ENCODE measurements at regions of chr7 and their contacts with region 1.

Region 1: DNA sequence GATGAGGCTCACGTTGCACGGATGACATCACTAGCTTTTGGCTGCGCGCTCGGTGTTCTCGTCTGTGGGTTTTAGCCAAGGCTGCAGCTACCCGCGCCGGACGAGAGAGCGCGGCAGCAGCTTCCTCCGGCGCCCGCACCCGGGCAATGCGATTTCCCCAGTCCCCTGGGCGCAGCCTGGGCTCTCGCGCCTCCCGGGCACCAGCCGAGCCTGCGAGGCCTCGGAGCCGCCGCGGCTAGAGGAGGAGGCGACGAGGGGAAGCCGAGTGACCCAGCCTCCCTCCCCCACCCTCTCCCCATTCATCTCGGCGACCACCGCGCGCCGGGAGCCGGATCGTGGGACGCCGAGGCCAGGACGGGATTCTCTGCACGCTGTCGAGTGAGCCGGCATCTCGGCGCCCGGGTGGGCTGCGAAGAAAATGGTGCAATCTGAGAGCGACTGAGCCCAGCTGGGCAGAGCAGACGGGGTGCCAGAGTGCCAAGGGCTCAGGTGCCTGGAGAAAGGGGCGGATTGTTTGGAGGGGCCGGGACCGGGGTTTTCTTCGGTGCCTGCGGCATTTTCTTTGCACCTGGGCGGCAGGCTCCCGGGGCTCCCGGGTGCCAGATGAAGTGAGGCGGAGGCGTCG is 1.2 kb upstream of the TMEM178B start:
- DNase-seq: peak; percentile 82
- H3K4me3 Mint-ChIP-seq: peak overlapping the region; percentile 83
- H3K27ac Mint-ChIP-seq: no peak overlapping the region
- H3K4me1 Mint-ChIP-seq: peaks cover 19% of the 10 kb centered on the region
- H3K27me3 Mint-ChIP-seq: peaks cover 43% of the 10 kb centered on the region

Region 2: DNA sequence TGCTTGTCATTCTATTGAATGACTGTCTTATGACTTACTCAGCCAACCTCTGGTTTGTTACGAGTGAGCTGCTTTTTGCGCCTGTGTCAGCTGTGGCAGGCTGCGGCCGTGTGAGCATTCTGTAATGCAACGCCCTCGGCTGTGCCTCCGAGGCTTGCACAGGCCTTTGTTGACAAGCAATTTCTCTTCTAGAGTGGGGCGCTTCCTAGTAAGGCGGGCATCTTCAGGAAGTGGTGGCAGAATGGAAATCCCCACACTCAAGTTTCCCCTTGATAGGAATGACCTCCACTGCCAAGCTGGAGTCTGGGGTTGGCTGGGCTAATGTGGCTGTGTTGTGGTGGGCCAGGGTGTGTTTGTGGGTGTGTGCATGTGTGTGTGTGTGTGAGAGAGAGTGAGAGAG is 19.0 kb before region 1 on chr7:
- intact Hi-C with region 1: loop called (anchors 2 kb)
- DNase-seq: peak; percentile 89
- H3K4me3 Mint-ChIP-seq: peak overlapping the region; percentile 16
- H3K27ac Mint-ChIP-seq: peak overlapping the region; percentile 83
- H3K4me1 Mint-ChIP-seq: peaks cover 20% of the 10 kb centered on the region
- H3K27me3 Mint-ChIP-seq: peaks cover 21% of the 10 kb centered on the region

Region 3: GRCh38 chr7:141654551-141654950 is 581.9 kb after region 1 on chr7:
- intact Hi-C with region 1: loop called (anchors 5 kb)
- DNase-seq: peak; percentile 90
- H3K4me3 Mint-ChIP-seq: no peak overlapping the region
- H3K27ac Mint-ChIP-seq: peak overlapping the region; percentile 73
- H3K4me1 Mint-ChIP-seq: peaks cover 4% of the 10 kb centered on the region
- H3K27me3 Mint-ChIP-seq: no peaks in the 10 kb centered on the region

Measured in activated CD4-positive, alpha-beta T cell treated with anti-CD3 and anti-CD28 coated beads, Interleukin-2, amount 10 ng/mL, durations not matched to agents 24 days and 14 days (primary cell).